Endothelial cell of umbilical vein (primary cell): ENCODE measurements at regions of chr18 and their contacts with region 1.

Region 1: DNA sequence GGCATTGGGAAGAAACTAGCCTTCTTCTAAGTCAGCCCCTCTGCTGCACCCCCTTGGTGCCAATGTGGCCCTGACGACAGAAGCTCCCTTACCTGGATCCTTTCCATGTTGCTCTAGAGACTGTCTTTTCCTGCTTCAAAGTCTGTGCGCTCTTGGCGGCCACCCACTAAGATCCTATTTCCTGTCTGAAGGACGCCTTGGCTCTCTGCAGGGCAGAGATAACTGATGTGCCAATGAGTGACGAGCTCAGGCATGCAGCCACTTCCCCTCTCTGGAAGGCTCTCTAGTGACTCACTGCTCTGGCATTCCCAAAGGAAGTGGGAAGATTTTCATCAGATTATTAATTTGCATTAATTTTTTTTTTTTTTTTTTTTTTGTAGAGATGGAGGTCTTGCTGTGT is 273.5 kb downstream of the CDH20 start:
- DNase-seq: peak; percentile 98
- H3K4me3 ChIP-seq: peak overlapping the region in 1 of 3 experiments; percentile 6
- H3K27ac ChIP-seq: peak overlapping the region; percentile 97
- H3K4me1 ChIP-seq: peaks cover 71% of the 10 kb centered on the region
- H3K27me3 ChIP-seq: no peaks in the 10 kb centered on the region
- CTCF ChIP-seq: no peak
- POLR2A ChIP-seq: peak; percentile 87

Region 2: GRCh38 chr18:59899298-59900221 is 1707.2 kb before region 1 on chr18 and contains the start of gene PMAIP1:
- CTCF ChIA-PET with region 1: no interaction called
- POLR2A ChIA-PET with region 1: no interaction called
- dilution Hi-C with region 1: no loop called
- intact Hi-C with region 1: loop called (anchors 5 kb)
- DNase-seq: peak; percentile 91
- H3K4me3 ChIP-seq: peak within 1 kb of the TSS; percentile 58 to 88 (median 76)
- H3K27ac ChIP-seq: peak within 1 kb of the TSS; percentile 75
- H3K4me1 ChIP-seq: peaks cover 27% of the 10 kb centered on the region
- H3K27me3 ChIP-seq: peaks cover 1 to 9% of the 10 kb centered on the region in 2 experiments
- CTCF ChIP-seq: no peak
- POLR2A ChIP-seq: peak; percentile 99
- total RNA-seq, gene PMAIP1: 11.9 and 13.5 TPM in 2 replicates

Region 3: GRCh38 chr18:61551586-61551985 is 55.2 kb before region 1 on chr18:
- CTCF ChIA-PET with region 1: interaction called, 5 read pairs
- POLR2A ChIA-PET with region 1: no interaction called
- dilution Hi-C with region 1: no loop called
- intact Hi-C with region 1: loop called (anchors 2 kb)
- DNase-seq: peak; percentile 88
- H3K4me3 ChIP-seq: no peak overlapping the region
- H3K27ac ChIP-seq: no peak overlapping the region
- H3K4me1 ChIP-seq: no peaks in the 10 kb centered on the region
- H3K27me3 ChIP-seq: no peaks in the 10 kb centered on the region
- CTCF ChIP-seq: peak; percentile 72 to 79
- POLR2A ChIP-seq: no peak

Region 4: DNA sequence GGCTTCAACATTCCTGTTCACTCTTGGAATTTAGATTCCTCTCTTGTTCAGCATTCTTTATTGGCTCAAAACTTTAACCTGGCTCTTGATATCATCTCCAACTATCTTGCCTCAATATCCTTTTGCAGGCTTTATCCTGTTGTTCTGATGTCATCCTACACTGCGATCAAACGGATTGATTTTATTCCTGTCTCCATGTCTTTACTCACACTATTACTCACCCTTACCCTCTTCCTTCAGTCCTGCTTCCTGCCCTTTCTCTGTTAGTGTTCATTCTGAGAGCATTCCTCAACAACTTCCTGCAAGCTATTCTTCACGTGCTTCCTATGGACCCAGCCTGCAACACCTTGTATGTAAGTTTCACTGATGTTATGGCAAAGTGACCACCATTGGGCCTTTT is 21.3 kb after region 1 on chr18:
- CTCF ChIA-PET with region 1: interaction called, 8 read pairs
- POLR2A ChIA-PET with region 1: interaction called, 5 read pairs
- dilution Hi-C with region 1: no loop called
- intact Hi-C with region 1: loop called (anchors 1 kb)
- DNase-seq: peak; percentile 75
- H3K4me3 ChIP-seq: peak overlapping the region in 1 of 3 experiments; percentile 22
- H3K27ac ChIP-seq: peak overlapping the region; percentile 63
- H3K4me1 ChIP-seq: peaks cover 18% of the 10 kb centered on the region
- H3K27me3 ChIP-seq: no peaks in the 10 kb centered on the region
- CTCF ChIP-seq: no peak
- POLR2A ChIP-seq: no peak

Region 5: DNA sequence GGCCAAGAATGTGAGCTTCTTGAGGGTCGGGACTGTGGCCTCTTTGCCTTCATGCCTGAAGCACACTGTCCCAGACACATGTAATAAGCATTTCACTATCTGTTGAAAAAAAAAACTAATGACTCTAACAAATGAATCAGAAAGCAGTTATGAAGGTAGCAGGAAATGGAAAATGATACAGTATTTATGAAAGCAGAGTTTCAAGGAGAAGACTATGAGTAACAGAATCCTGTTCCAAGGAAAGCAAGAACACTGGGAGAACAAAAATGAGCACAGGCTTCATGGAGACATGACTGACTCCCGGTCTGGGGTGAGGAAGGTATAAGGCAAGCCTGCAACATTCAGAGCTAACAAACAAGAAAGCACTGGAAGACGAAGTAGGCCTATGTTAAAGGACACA is 95.2 kb after region 1 on chr18:
- CTCF ChIA-PET with region 1: no interaction called
- POLR2A ChIA-PET with region 1: no interaction called
- dilution Hi-C with region 1: no loop called
- intact Hi-C with region 1: loop called (anchors 2 kb)
- DNase-seq: peak; percentile 85
- H3K4me3 ChIP-seq: no peak overlapping the region
- H3K27ac ChIP-seq: peak overlapping the region; percentile 78
- H3K4me1 ChIP-seq: peaks cover 24% of the 10 kb centered on the region
- H3K27me3 ChIP-seq: no peaks in the 10 kb centered on the region
- CTCF ChIP-seq: no peak
- POLR2A ChIP-seq: no peak

Region 6: GRCh38 chr18:61929851-61930640 is 323.3 kb after region 1 on chr18:
- CTCF ChIA-PET with region 1: no interaction called
- POLR2A ChIA-PET with region 1: no interaction called
- dilution Hi-C with region 1: no loop called
- intact Hi-C with region 1: no loop called
- DNase-seq: peak; percentile 36
- H3K4me3 ChIP-seq: no peak overlapping the region
- H3K27ac ChIP-seq: no peak overlapping the region
- H3K4me1 ChIP-seq: no peaks in the 10 kb centered on the region
- H3K27me3 ChIP-seq: no peaks in the 10 kb centered on the region
- CTCF ChIP-seq: no peak
- POLR2A ChIP-seq: no peak

Region 7: DNA sequence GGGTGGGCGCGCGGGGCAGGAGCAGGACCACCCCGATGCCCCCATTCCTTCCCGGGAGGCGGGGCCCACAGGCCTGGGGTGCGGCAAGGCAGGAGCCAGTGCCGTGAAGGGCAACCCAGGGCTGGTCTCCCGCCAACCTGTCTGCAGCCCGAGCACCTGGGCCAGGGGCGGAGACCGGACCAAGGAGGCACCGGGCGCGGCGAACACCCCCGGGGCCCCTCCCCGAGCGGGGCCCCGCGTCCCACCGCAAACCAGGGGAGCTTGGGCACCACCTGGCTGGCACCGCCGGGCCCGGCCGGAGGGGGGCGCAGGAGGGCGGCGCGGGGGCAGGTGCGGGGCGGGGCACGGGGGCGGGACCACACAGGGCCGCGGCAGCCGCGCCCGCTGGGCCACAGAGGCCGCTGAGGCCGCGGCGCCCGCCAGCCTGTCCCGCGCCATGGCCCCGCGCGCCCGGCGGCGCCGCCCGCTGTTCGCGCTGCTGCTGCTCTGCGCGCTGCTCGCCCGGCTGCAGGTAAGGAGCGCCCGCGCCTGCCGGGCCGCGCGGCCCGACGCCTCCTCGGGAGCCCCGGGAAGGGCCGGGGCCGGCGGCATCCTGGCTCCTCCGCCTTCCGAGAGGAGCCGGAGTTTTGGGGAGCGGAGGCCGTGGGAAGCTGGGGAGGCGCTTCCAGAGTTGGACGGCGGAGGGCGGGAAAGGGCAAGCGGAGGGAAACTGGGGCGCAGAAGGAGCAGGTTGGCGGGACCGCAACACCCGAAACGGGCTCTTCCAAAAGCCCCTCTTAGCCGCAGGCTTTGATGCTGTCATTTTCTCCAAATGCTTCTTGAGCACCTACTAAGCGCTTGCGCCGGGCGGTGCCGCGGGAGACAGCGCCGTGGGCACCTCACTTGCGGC is 718.4 kb after region 1 on chr18 and contains the start of gene TNFRSF11A:
- CTCF ChIA-PET with region 1: no interaction called
- POLR2A ChIA-PET with region 1: no interaction called
- dilution Hi-C with region 1: no loop called
- intact Hi-C with region 1: loop called (anchors 10 kb)
- DNase-seq: peak; percentile 30
- H3K4me3 ChIP-seq: peak within 1 kb of the TSS; percentile 55 to 84 (median 83)
- H3K27ac ChIP-seq: no peak within 1 kb of the TSS
- H3K4me1 ChIP-seq: peaks cover 55% of the 10 kb centered on the region
- H3K27me3 ChIP-seq: no peaks in the 10 kb centered on the region
- CTCF ChIP-seq: peak; percentile 12 to 42
- POLR2A ChIP-seq: no peak
- total RNA-seq, gene TNFRSF11A: 11.1 and 11.9 TPM in 2 replicates